Activated T-helper 1 cell treated with anti-CD3 and anti-CD28 coated beads, Interleukin-12 subunit alpha, Interleukin-12 subunit beta, Interleukin-2, Interleukin-4 antibody, amounts not matched to agents 30 ng/mL and 10 ng/mL and 1 ng/mL, durations not matched to agents 14 hours and 24 hours and 36 hours (primary cell): ENCODE measurements at regions of chr20 and their contacts with region 1.

Region 1: DNA sequence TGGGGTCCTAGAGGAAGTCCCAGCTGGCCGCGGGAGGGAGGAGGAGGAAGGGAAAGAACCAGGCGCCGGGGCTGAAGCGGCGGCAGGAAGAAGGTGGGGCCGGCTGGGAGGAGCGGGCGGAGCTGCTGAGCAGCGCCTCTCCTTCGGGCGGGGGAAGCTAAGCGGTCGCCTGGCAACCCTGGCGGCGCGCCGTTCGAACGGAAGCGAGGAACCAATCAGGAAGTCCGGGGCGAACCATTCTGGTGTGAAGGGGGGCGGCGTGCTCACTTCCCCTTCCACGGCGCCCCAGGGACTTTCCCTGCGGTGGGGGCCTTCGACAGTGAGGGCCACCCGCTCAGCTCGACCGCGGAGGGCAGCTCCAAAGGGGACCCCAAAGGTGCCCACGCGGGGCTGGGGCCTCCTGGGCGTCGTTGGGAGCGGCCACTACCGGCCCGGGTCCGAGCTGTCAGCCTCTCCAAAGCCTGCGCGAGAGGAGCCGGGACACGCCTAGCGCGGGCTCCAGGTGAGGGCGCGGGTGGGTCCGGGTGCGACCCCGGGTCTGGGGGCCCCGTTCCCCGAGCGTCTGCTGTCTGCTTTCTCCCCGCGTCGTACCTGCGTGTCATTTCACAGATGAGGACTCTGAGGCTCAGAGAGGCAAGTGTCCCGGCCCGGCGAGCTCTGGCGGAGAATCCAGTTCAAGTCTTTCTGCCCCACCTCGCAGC is at the start of gene FAM110A:
- DNase-seq: peak; percentile 95
- H3K4me3 Mint-ChIP-seq: peak within 1 kb of the TSS; percentile 81
- H3K27ac Mint-ChIP-seq: peak within 1 kb of the TSS; percentile 86
- H3K4me1 Mint-ChIP-seq: peaks cover 51% of the 10 kb centered on the region
- H3K27me3 Mint-ChIP-seq: peaks cover 2% of the 10 kb centered on the region
- total RNA-seq, gene FAM110A: 19.0 and 21.1 TPM in 2 replicates

Region 2: DNA sequence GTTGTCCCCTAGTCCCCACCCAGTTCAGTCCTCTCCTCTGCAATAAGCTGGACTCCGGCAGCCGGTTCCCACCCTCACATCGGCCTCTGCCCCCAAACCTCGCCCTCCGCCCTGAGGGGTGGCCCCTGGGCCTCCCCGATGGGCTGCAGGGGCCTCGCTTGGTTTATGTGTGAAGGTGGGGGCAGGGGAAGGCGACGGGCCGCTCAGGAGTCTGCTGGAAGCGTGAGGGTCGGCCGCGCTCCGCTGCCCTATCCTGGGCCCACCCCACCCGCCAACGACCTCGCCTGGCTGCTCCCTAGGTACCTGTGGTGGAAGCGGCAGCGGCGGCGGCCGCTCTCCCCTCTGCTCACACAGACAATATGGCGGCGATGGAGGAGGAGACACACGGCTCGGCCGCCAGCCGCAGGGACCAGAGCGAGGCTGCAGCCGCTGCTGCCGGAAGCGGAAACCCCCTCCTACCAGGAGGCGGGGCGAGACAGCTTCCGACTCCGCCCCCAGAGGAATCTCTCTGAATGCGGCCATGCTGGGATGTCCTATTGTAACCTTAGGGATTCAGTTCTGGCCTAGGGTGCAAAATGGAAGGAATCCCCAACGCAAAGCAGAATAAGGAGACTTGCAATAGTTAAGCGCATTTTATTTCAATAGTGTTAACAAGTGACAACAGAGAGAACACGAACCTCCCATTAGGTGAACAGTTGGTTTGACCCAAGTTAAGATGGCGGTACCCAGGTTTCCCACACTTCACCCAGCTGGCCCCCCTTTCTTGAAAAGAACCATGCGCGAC is 290.0 kb before region 1 on chr20 and contains the start of gene CSNK2A1:
- intact Hi-C with region 1: loop called (anchors 1 kb)
- DNase-seq: peak; percentile 94
- H3K4me3 Mint-ChIP-seq: peak within 1 kb of the TSS; percentile 91
- H3K27ac Mint-ChIP-seq: peak within 1 kb of the TSS; percentile 91
- H3K4me1 Mint-ChIP-seq: peaks cover 47% of the 10 kb centered on the region
- H3K27me3 Mint-ChIP-seq: peaks cover 3% of the 10 kb centered on the region
- total RNA-seq, gene CSNK2A1: 181 and 185 TPM in 2 replicates

Region 3: DNA sequence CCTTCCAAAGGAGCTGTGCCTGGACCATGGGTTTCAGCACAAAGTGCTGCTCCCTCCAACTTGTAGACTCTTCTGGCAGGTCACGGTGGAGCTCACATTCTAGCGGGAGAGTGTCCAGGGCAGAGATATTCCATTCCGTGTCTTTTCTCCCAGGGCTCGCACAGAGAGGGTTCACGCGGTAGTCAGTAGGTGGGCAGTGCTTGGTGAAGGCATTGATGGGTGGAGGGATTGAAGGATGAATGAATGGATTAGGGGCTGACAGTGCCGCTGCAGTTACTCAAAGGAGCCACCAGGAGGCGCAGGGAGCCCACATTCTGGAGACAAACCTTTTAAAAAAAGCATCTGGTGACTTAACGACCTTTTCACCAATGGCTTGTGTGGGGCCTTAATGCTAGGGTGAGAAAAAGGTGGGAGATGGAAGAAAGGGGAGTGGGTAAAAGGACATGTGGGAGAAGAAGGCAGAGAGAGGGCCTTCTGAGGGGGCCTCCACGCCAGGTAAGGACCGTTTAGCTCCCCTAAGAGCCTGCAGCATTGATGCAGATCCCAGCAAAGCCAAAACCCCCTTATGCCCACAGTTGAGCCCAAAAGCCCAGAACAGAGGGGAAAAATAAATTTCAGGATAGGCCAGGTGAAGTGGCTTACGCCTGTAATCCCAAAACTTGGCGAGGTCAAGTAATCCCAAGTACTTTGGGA is 17.5 kb before region 1 on chr20:
- intact Hi-C with region 1: loop called (anchors 1 kb)
- DNase-seq: peak; percentile 48
- H3K4me3 Mint-ChIP-seq: no peak overlapping the region
- H3K27ac Mint-ChIP-seq: no peak overlapping the region
- H3K4me1 Mint-ChIP-seq: peaks cover 15% of the 10 kb centered on the region
- H3K27me3 Mint-ChIP-seq: peaks cover 14% of the 10 kb centered on the region

Region 4: DNA sequence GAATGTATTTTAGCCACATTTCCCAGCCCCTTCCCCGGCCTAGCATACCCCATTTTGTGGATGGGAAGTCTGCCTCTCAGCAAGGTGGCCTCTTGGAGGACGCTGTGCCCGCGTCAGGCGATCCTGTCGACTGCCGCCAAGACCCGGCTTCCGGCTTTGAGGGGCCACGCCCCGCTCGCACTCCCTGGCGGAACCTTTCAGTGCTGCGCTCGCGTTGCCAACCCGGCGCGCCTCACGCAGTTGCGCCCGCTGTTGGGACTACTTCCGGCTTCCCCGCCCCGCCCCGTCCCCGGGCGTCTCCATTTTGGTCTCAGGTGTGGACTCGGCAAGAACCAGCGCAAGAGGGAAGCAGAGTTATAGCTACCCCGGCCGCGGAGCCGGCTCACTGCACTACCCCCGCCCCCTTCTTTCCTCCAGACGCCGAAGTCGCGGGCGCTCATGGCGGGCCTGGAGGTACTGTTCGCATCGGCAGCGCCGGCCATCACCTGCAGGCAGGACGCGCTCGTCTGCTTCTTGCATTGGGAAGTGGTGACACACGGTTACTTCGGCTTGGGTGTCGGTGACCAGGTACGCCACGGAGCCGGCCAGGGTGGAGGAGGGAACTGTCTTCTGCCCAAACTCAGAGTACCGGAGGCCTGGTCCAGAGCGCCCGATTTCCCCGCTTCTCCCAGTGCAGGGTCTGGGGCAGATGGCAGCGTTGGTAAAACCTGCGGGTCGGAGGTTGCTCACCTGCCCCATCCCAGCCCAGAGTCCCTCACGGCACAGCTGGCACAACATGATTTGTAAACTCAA is 284.9 kb after region 1 on chr20 and contains the start of gene PSMF1:
- intact Hi-C with region 1: loop called (anchors 2 kb)
- DNase-seq: peak; percentile 95
- H3K4me3 Mint-ChIP-seq: peak within 1 kb of the TSS; percentile 91
- H3K27ac Mint-ChIP-seq: peak within 1 kb of the TSS; percentile 81
- H3K4me1 Mint-ChIP-seq: peaks cover 56% of the 10 kb centered on the region
- H3K27me3 Mint-ChIP-seq: no peaks in the 10 kb centered on the region
- total RNA-seq, gene PSMF1: 185 and 189 TPM in 2 replicates

Region 5: GRCh38 chr20:1325173-1326030 is 491.8 kb after region 1 on chr20:
- intact Hi-C with region 1: loop called (anchors 2 kb)
- DNase-seq: peak; percentile 98
- H3K4me3 Mint-ChIP-seq: no peak overlapping the region
- H3K27ac Mint-ChIP-seq: no peak overlapping the region
- H3K4me1 Mint-ChIP-seq: peaks cover 14% of the 10 kb centered on the region
- H3K27me3 Mint-ChIP-seq: peaks cover 6% of the 10 kb centered on the region

Region 6: GRCh38 chr20:2651772-2652723 is 1818.4 kb after region 1 on chr20 and contains the start of gene NOP56:
- intact Hi-C with region 1: loop called (anchors 10 kb)
- DNase-seq: peak; percentile 94
- H3K4me3 Mint-ChIP-seq: peak within 1 kb of the TSS; percentile 93
- H3K27ac Mint-ChIP-seq: peak within 1 kb of the TSS; percentile 93
- H3K4me1 Mint-ChIP-seq: peaks cover 24% of the 10 kb centered on the region
- H3K27me3 Mint-ChIP-seq: no peaks in the 10 kb centered on the region
- total RNA-seq, gene NOP56: 863 and 897 TPM in 2 replicates